Dendritic cell treated with granulocyte-macrophage colony-stimulating factor and Interleukin-4, amounts not matched to agents 40 ng/mL and 50 ng/mL, for 4 days (primary cell): ENCODE measurements at regions of chr17 and their contacts with region 1.

Region 1: DNA sequence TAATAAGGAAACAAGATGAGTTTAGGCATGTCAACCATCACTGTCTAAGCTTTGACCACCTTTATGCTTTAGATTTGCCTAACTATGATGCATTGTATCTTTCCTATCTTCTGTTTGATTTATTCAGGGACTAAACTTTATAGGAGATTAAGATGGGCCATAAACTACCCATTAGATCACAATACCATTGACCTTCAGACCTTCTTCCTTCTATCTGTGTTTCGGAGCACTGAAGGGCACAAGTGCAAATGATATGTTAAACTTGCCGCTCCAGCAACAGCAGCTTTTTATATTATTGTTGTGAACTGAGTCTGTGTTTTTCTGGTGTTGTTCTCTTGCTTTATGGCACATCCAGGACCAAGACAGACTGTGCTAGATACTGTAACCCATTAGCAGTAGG is 16.6 kb upstream of the ALDH3A2 start:
- H3K4me3 Mint-ChIP-seq: no peak overlapping the region
- H3K27ac Mint-ChIP-seq: no peak overlapping the region
- H3K4me1 Mint-ChIP-seq: no peaks in the 10 kb centered on the region
- H3K27me3 Mint-ChIP-seq: no peaks in the 10 kb centered on the region

Region 2: DNA sequence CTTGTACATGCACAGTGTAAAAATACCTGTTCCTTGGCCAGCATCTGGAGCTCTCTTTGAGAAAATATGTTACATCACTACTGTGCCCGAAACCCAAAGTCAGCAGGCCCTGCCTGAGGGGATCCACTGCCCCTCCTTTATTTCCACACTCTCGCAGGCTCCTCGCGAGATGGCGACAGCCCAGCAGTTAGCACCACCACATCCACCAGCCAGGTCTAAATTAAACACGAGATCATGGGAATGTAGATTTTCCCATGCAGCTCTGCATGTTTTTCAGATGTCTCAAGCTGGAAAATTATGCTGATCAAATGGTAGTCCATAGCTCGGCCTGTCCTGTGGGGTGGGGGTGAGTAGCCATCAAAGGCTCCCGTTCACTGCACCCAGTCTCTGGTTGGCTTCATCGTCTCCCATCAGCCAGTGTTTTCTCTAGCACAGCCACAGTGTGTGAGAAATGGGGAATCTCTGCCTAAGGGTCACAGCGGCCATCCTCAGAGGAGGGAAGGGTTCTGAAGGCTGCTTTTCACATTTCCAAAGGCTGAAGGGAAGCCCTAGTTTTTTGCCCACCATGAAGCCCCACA is 360.0 kb before region 1 on chr17:
- intact Hi-C with region 1: no loop called
- H3K4me3 Mint-ChIP-seq: no peak overlapping the region
- H3K27ac Mint-ChIP-seq: no peak overlapping the region
- H3K4me1 Mint-ChIP-seq: peaks cover 41% of the 10 kb centered on the region
- H3K27me3 Mint-ChIP-seq: peaks cover 67% of the 10 kb centered on the region

Region 3: DNA sequence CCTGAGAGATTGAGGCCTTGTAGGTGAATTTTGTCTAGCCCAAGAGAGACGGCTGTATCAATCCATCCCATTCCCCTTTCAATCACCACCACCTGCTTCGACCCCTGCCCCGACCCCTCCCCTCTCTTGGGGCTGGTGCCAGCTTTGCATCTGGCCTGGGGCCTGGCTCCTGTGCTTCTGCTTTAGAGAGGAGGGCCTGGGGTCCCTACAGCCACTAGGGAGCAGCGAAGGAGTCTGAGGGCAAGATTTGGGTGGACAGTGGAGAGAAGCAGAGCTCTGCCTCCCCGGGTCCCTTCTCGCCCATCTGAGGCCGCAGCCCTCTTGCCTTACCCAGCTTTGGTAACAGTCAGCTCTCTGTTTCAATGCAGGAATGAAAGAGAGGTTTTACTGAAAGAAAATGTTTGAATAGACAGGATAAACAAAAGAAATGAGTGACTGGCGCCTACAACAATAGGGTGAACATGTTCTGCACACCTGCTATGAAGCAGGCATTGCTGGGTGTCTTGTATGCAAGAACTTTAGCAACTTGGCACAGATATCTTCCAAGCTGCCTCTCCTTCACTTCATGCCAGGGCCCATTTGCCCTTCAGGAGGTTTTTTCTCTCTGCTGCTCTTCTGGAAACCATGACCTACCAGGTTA is 40.9 kb before region 1 on chr17:
- intact Hi-C with region 1: loop called (anchors 1 kb)
- H3K4me3 Mint-ChIP-seq: no peak overlapping the region
- H3K27ac Mint-ChIP-seq: peak overlapping the region; percentile 78
- H3K4me1 Mint-ChIP-seq: peaks cover 23% of the 10 kb centered on the region
- H3K27me3 Mint-ChIP-seq: no peaks in the 10 kb centered on the region

Region 4: DNA sequence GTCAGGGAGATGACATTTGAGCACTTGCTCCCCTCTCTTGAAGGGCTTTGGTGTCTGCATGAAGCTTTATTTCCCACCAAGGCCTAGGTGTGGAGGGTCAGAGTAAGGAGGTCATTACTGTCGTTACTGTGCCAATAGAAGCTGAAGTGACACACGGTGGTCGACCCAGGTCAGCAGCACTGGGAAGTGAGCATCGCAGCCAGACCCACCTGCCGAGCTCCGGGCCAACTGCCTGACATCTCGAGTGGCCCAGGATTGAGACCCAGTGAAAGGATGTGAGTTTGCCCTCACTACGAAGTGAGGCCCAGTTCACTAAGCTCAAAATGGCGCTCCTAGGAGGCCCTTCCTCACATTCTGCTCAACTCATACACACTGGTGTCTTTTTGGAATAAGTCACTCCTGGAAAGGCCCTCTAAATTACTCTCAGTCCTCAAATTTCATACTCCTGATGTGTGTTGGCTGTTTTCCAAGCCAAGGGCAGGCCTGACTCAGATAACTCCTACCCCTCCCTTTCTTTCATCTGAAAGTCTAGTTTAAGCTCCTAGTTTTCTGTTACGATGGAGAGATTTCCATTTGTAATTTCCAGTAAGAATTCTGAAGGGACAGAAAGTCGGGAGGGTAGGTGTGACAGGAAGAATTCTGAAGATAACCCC is 635.0 kb after region 1 on chr17:
- intact Hi-C with region 1: no loop called
- H3K4me3 Mint-ChIP-seq: no peak overlapping the region
- H3K27ac Mint-ChIP-seq: peak overlapping the region; percentile 40
- H3K4me1 Mint-ChIP-seq: peaks cover 16% of the 10 kb centered on the region
- H3K27me3 Mint-ChIP-seq: no peaks in the 10 kb centered on the region